Ascending aorta (tissue), 2 donors: ENCODE measurements at regions of chr1 and their contacts with region 1.

Region 1: DNA sequence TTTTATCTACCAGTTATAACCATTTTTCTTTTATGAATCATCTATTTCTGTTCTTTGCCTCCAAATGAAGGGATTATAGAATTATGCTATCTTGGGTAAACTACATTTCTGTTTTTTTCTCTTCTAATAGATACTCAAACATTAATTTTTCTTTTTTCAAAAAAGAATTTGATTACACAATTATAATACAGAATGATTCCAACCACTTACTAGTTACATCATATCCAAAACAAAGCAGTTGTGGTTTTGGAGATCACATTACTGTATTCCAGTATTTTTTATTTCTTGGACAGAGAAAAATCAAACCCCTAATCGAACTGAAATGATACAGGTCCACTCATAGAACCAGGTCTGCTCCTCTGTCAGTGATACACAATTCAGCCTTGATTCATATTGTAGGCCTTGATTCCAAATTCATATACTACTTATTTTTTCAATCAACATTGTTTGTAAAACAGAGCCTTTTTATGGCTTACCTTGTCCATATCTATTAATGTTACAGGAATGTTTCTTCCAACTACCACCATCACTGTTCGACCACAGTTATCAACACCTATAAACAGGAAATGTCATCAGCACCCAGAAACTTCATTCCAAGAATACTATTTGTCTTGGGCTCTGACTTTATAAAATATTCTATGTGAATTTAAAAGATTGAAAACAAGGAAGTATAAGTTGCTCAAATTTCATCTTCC is 43.2 kb downstream of the GDAP2 start:
- DNase-seq: no peak
- H3K4me3 ChIP-seq: no peak overlapping the region
- H3K27ac ChIP-seq: no peak overlapping the region
- H3K4me1 ChIP-seq: no peaks in the 10 kb centered on the region
- H3K27me3 ChIP-seq: no peaks in the 10 kb centered on the region
- CTCF ChIP-seq: no peak

Region 2: GRCh38 chr1:117814856-117815797 is 71.1 kb before region 1 on chr1:
- intact Hi-C with region 1: loop called (anchors 5 kb)
- DNase-seq: no peak
- H3K4me3 ChIP-seq: no peak overlapping the region
- H3K27ac ChIP-seq: peak overlapping the region; percentile 32 to 60
- H3K4me1 ChIP-seq: peaks cover 0 to 23% of the 10 kb centered on the region in 2 donors
- H3K27me3 ChIP-seq: no peaks in the 10 kb centered on the region
- CTCF ChIP-seq: no peak

Region 3: GRCh38 chr1:117861694-117862093 is 24.6 kb before region 1 on chr1:
- intact Hi-C with region 1: no loop called
- DNase-seq: no peak
- H3K4me3 ChIP-seq: no peak overlapping the region
- H3K27ac ChIP-seq: no peak overlapping the region
- H3K4me1 ChIP-seq: no peaks in the 10 kb centered on the region
- H3K27me3 ChIP-seq: no peaks in the 10 kb centered on the region
- CTCF ChIP-seq: no peak